ENCODE measurements at regions of chr2 and their contacts with region 1.

Region 1: DNA sequence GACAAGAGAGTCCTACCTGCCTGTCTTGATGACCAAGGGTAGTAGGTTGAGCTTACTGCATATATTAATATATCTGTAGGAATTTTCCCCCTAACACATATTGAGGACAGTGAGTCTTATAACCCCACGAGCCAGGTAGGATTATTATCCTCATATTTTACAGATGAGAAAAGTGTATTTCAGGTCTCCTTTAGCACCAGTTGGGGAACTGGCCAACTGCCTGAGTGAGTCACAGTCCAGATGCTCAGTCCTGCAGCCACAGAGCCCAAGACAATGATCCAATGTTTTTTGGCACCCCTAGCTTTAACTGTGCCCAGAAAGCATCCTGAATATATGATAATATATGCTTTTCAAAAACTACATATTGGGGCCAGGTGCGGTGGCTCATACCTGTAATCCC is 30.8 kb upstream of the GLS start:
- DNase-seq: no peak
- H3K4me3 Mint-ChIP-seq: no peak overlapping the region
- H3K27ac Mint-ChIP-seq: no peak overlapping the region
- H3K4me1 Mint-ChIP-seq: no peaks in the 10 kb centered on the region
- H3K27me3 Mint-ChIP-seq: no peaks in the 10 kb centered on the region

Region 2: DNA sequence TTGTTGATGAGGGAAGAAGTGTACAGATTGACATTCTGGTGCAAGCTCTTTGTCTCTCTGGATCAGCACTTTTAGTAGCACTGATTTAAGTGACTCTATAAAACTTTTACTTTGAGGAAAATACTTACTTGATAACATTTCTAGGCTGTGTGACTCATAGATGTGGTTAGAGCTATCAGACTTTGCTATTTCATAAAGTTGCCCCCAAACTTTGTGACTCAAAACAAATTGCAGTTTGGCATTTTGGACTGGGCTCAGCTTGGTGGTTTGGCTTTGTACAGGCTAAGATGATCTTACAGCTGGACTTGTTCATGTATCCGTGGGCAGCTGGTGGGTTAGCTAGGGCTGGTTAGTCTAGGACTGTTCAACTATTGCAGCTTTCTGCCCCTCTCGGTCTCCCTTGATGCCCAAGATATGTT is 11.3 kb before region 1 on chr2:
- CTCF ChIA-PET with region 1: interaction called, 20 read pairs
- DNase-seq: no peak
- H3K4me3 Mint-ChIP-seq: no peak overlapping the region
- H3K27ac Mint-ChIP-seq: no peak overlapping the region
- H3K4me1 Mint-ChIP-seq: no peaks in the 10 kb centered on the region
- H3K27me3 Mint-ChIP-seq: peaks cover 4% of the 10 kb centered on the region

Region 3: GRCh38 chr2:190863946-190864345 is 14.2 kb after region 1 on chr2:
- CTCF ChIA-PET with region 1: interaction called, 17 read pairs
- DNase-seq: no peak
- H3K4me3 Mint-ChIP-seq: no peak overlapping the region
- H3K27ac Mint-ChIP-seq: no peak overlapping the region
- H3K4me1 Mint-ChIP-seq: peaks cover 17% of the 10 kb centered on the region
- H3K27me3 Mint-ChIP-seq: no peaks in the 10 kb centered on the region

Region 4: DNA sequence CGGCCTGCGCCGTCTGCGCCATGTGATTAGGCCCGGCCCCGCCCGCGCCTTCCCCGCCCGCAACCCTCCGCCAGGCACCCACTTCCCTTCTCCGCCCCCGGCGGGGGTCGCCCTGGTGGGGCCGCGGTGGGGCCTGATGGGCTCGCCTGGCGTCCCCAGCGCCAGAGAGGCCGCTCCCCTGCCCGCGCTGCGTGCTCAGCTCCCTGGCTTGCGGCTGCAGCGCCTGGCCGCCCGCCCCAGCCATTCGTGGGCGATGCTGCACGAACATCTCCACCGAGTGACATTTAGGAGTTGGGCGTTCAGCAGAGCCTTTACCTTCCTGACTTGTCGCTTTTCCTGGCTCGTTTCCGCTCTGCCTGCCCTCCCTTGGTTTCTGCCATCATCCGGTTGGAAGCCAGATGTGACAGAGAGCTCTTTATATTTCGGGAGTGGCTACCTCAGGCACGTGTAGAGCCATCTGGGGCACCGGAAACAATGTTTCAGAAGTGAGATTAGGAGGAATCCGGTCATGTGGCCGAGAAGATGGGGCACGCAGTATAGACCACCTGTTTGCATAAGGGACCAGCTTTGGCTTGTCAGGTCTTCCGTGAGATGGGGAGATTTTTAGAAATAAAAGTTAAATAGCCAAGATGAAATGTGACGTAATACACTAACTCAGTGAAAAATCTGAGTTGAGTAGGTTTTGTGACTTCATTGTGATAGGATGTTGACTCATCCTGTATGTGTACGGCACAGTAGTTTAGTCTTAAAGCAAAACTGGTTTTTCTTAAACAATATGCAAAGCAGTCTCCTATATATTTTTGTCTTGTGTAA is 32.0 kb after region 1 on chr2:
- CTCF ChIA-PET with region 1: interaction called, 11 read pairs
- DNase-seq: peak; percentile 83
- H3K4me3 Mint-ChIP-seq: peak overlapping the region; percentile 83
- H3K27ac Mint-ChIP-seq: peak overlapping the region; percentile 97
- H3K4me1 Mint-ChIP-seq: peaks cover 50% of the 10 kb centered on the region
- H3K27me3 Mint-ChIP-seq: peaks cover 3% of the 10 kb centered on the region

Region 5: DNA sequence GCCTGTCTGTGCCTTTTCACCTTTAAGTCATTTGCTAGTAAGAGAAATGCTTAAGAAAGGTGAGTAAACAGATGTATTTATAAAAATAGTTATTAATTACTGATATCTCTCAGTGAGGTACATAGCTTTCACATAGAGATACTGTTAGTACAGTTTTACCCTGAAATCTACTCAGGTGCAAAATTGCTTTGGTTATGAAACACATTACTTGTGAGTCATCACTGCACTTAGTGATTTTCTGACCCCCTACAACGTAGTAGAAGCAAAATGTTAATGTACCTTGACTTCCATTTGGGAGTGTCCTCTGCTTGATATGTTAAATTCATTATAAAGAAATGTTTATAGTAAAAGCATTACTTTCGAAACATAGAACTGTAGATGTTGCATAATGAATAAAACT is 37.3 kb after region 1 on chr2:
- CTCF ChIA-PET with region 1: interaction called, 11 read pairs
- DNase-seq: no peak
- H3K4me3 Mint-ChIP-seq: no peak overlapping the region
- H3K27ac Mint-ChIP-seq: no peak overlapping the region
- H3K4me1 Mint-ChIP-seq: peaks cover 71% of the 10 kb centered on the region
- H3K27me3 Mint-ChIP-seq: no peaks in the 10 kb centered on the region

Region 6: GRCh38 chr2:190947711-190948251 is 98.0 kb after region 1 on chr2:
- CTCF ChIA-PET with region 1: interaction called, 41 read pairs
- DNase-seq: no peak
- H3K4me3 Mint-ChIP-seq: no peak overlapping the region
- H3K27ac Mint-ChIP-seq: peak overlapping the region; percentile 68
- H3K4me1 Mint-ChIP-seq: peaks cover 14% of the 10 kb centered on the region
- H3K27me3 Mint-ChIP-seq: no peaks in the 10 kb centered on the region